H1 (cell line): ENCODE measurements at regions of chr3 and their contacts with region 1.

Region 1: DNA sequence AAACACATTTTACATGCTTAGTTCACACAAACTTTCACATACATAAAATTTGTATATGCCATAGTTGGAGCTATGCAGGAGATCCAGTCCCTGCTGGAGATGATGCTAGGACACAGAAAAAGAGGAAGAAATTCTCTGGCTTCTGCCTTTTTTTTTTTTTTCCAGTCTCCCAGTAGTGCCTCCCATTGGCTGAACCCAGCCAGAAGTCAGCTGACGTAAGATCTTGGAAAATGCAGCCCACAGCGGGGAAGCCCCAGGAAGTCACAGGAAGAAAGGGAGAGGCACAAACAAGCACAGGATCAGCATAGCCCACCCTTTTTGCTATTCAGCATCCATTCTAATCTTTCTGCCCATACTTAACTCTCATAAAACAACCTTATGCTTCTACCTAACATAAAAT is 38.5 kb downstream of the SCN11A start:
- DNase-seq: no peak
- H3K4me3 ChIP-seq: no peak overlapping the region
- H3K27ac ChIP-seq: no peak overlapping the region
- H3K4me1 ChIP-seq: peaks cover 0 to 3% (median 1%) of the 10 kb centered on the region in 4 experiments; a peak in 1 of 7 replicates
- H3K27me3 ChIP-seq: no peaks in the 10 kb centered on the region
- CTCF ChIP-seq: no peak
- EP300 ChIP-seq: no peak
- POLR2A ChIP-seq: no peak
- RAD21 ChIP-seq: no peak

Region 2: GRCh38 chr3:39025222-39025970 is 12.1 kb after region 1 on chr3:
- CTCF ChIA-PET with region 1: interaction called, 12 read pairs
- POLR2A ChIA-PET with region 1: no interaction called
- DNase-seq: no peak
- H3K4me3 ChIP-seq: no peak overlapping the region
- H3K27ac ChIP-seq: no peak overlapping the region
- H3K4me1 ChIP-seq: no peaks in the 10 kb centered on the region
- H3K27me3 ChIP-seq: no peaks in the 10 kb centered on the region
- CTCF ChIP-seq: no peak
- EP300 ChIP-seq: no peak
- POLR2A ChIP-seq: no peak
- RAD21 ChIP-seq: no peak